IMR-90 (cell line): ENCODE measurements at regions of chr7 and their contacts with region 1.

Region 1: DNA sequence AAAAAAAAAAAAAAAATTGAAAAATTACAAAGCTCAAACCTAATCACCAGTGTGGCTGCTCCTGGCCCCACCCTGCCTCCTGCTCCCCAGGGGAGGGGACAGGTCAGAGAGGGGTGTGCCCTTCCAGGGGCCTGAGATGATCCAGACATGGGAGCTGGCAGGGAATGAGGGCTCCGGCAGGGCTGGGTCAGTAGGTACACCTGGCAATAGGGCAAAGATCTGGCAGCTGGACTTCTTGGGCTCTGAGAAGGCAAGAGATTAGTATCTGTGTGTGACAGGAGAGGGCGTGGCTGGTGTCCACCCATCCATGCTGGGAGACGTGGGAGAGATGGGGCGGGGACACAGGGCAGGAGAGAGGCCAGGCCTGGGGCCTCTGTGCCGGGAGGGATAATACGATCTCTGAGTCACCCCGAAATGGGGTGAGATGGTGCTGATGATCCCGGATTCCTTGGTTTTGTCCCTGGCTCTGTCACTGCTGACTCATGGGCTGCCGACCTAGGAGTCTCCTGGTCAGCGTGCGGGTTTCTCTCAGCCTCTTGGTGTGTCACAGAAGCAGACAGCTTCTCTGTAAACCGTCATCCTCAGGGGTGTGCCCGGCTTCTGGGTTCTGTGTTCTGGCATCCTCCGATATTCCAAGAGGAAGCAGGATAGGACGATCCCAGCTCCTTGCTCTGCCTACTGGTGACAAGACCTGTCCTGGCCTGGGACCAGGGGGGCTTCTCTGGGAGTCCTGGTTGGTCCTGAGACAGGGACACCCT is 8.3 kb upstream of the CLDN4 start:
- DNase-seq: peak; percentile 97
- ATAC-seq: peak; percentile 96
- H3K4me3 ChIP-seq: no peak overlapping the region
- H3K27ac ChIP-seq: peak overlapping the region; percentile 35; the same call in 1 of the 2 replicates
- H3K4me1 ChIP-seq: peaks cover 10% of the 10 kb centered on the region
- H3K27me3 ChIP-seq: no peaks in the 10 kb centered on the region
- CTCF ChIP-seq: no peak
- POLR2A ChIP-seq: no peak
- RAD21 ChIP-seq: no peak

Region 2: DNA sequence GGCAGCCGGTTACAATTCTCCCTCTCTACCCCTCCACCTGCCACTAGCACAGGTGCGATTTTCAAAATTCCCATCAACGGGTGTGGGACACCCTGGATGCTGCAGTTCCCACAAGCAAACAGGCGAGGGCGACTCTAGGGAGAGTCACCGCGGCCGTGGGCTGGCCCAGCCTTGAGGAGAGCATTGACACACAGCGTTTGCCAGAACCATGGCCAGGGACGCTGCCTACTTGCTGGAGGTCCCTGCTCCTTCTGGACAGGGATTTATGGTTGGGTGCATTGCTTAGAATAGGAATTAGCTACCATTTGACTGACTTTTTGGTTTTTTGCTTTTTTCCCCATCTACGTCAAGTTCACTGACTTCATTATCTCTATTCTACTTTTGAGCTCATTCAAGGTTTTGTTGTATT is 10.7 kb before region 1 on chr7:
- CTCF ChIA-PET with region 1: interaction called, 10 read pairs
- POLR2A ChIA-PET with region 1: interaction called, 5 read pairs
- dilution Hi-C with region 1: no loop called
- in situ Hi-C with region 1: no loop called
- intact Hi-C with region 1: no loop called
- DNase-seq: peak; percentile 41
- ATAC-seq: peak; percentile 93
- H3K4me3 ChIP-seq: no peak overlapping the region
- H3K27ac ChIP-seq: no peak overlapping the region
- H3K4me1 ChIP-seq: 0 out of 2 replicates have a peak, but pooled peaks cover 2% of the 10 kb centered on the region
- H3K27me3 ChIP-seq: no peaks in the 10 kb centered on the region
- CTCF ChIP-seq: peak; percentile 71
- POLR2A ChIP-seq: no peak
- RAD21 ChIP-seq: peak; percentile 81